Activated CD4-positive, alpha-beta memory T cell treated with anti-CD3 and anti-CD28 coated beads for 36 hours (primary cell): ENCODE measurements at regions of chr15 and their contacts with region 1.

Region 1: GRCh38 chr15:67542420-67543347 is at the start of gene MAP2K5:
- DNase-seq: peak; percentile 86
- H3K4me3 Mint-ChIP-seq: peak within 1 kb of the TSS; percentile 93
- H3K27ac Mint-ChIP-seq: peak within 1 kb of the TSS; percentile 93
- H3K4me1 Mint-ChIP-seq: peaks cover 43% of the 10 kb centered on the region
- H3K27me3 Mint-ChIP-seq: no peaks in the 10 kb centered on the region
- total RNA-seq, gene MAP2K5: 16.5 to 17.4 TPM

Region 2: GRCh38 chr15:67521029-67521811 is 21.5 kb before region 1 on chr15 and contains the start of gene C15orf61:
- CTCF ChIA-PET with region 1: no interaction called
- POLR2A ChIA-PET with region 1: interaction called, 20 read pairs
- intact Hi-C with region 1: loop called (anchors 1 kb)
- DNase-seq: peak; percentile 92
- H3K4me3 Mint-ChIP-seq: peak within 1 kb of the TSS; percentile 96
- H3K27ac Mint-ChIP-seq: peak within 1 kb of the TSS; percentile 99
- H3K4me1 Mint-ChIP-seq: peaks cover 23% of the 10 kb centered on the region
- H3K27me3 Mint-ChIP-seq: no peaks in the 10 kb centered on the region
- total RNA-seq, gene C15orf61: 4.1 to 4.3 TPM

Region 3: DNA sequence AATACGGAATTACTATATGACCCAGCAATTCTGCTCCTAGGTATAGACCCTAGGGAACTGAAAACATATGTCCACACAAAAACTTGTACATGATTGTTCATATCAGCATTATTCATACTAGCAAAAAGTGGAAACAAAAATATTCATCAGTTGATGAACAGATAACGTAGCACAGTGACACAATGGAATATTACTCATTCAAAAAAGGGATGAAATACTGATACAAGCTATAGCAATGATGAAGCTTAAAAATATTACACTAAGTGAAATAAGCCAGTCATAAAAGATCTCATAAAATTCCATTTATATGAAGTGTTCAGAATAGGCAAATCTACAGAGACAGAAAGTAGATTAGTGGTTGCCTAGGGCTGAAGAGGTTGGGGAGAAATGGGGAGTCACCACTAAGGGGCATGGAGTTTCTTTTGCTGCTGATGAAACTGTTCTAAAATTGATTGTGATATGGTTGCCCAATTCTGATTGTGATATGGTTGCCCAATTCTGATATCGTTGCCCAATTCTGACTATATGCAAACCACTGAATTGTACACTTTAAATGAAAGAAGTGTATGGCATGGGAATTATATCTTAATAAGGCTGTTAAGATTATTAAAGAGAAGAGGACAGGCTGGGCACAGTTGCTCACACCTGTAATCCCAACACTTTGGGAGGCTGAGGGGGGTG is 11.2 kb before region 1 on chr15:
- CTCF ChIA-PET with region 1: no interaction called
- POLR2A ChIA-PET with region 1: interaction called, 4 read pairs
- intact Hi-C with region 1: loop called (anchors 1 kb)
- DNase-seq: no peak
- H3K4me3 Mint-ChIP-seq: no peak overlapping the region
- H3K27ac Mint-ChIP-seq: no peak overlapping the region
- H3K4me1 Mint-ChIP-seq: peaks cover 16% of the 10 kb centered on the region
- H3K27me3 Mint-ChIP-seq: no peaks in the 10 kb centered on the region

Region 4: GRCh38 chr15:67998599-67999122 is 456.0 kb after region 1 on chr15:
- CTCF ChIA-PET with region 1: no interaction called
- POLR2A ChIA-PET with region 1: no interaction called
- intact Hi-C with region 1: no loop called
- DNase-seq: no peak
- H3K4me3 Mint-ChIP-seq: no peak overlapping the region
- H3K27ac Mint-ChIP-seq: no peak overlapping the region
- H3K4me1 Mint-ChIP-seq: no peaks in the 10 kb centered on the region
- H3K27me3 Mint-ChIP-seq: no peaks in the 10 kb centered on the region